Transverse colon (tissue), 4 donors: ENCODE measurements at regions of chr21 and their contacts with region 1.

Region 1: GRCh38 chr21:15729674-15730483 is at the start of gene USP25:
- DNase-seq: peak; percentile 95
- H3K4me3 ChIP-seq: peak within 1 kb of the TSS; percentile 74 to 88 (median 84)
- H3K27ac ChIP-seq: peak within 1 kb of the TSS; percentile 96 to 99 (median 96)
- H3K4me1 ChIP-seq: peaks cover 5 to 41% (median 22%) of the 10 kb centered on the region in 4 donors
- H3K27me3 ChIP-seq: no peaks in the 10 kb centered on the region
- CTCF ChIP-seq: no peak
- EP300 ChIP-seq: no peak
- POLR2A ChIP-seq: peak; percentile 68
- total RNA-seq, gene USP25: 37.4 to 107 (median 69.2) TPM

Region 2: GRCh38 chr21:14382835-14383594 is 1346.9 kb before region 1 on chr21 and contains the start of gene HSPA13:
- in situ Hi-C with region 1: no loop called
- intact Hi-C with region 1: loop called (anchors 10 kb)
- DNase-seq: peak; percentile 100
- H3K4me3 ChIP-seq: peak within 1 kb of the TSS; percentile 77 to 96 (median 84)
- H3K27ac ChIP-seq: peak within 1 kb of the TSS; percentile 88 to 93 (median 92)
- H3K4me1 ChIP-seq: peaks cover 17 to 37% (median 17%) of the 10 kb centered on the region in 4 donors
- H3K27me3 ChIP-seq: no peaks in the 10 kb centered on the region
- CTCF ChIP-seq: peak in 1 of 5 experiments; percentile 9
- EP300 ChIP-seq: no peak
- POLR2A ChIP-seq: peak; percentile 77
- total RNA-seq, gene HSPA13: 1.9 to 20.7 (median 13.6) TPM

Region 3: DNA sequence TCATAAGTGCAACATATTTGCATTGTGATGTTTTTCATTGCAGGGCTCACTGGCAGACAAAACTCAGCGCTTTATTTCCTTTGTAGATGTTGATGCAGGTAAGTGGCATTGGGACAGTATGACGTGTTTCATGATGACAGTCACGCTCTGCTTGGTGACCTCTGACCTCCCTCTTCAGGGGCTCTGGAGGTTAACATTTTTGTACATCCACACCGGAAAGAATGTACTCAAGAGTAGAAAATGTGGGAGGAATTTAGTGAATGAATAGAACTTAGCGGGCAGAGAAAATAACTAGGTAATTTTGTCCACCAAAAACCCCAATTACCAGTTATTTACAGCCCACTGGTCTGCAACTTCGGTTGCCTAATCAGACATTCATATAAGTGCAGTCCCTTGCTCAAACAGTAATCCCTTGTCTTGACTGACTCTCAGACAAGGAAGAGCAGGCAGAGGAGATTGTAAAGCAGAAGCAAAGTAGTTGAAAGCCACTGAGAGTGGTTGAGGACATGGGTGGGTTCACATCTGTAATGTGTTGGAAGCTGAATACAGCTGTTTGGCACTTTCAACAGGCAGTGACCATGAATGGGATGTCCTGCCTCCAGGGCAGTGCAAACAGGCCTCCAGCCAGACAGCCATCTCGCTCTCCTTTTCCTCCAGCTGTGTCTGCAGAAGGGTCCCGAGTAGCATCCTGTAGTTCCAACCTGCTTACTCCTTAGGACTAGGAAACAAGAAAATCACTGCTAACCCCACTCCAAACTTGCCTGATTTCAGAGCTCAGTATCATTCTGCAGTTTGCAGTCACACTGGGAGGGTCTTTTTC is 854.0 kb before region 1 on chr21:
- in situ Hi-C with region 1: no loop called
- intact Hi-C with region 1: no loop called
- DNase-seq: no peak
- H3K4me3 ChIP-seq: no peak overlapping the region
- H3K27ac ChIP-seq: no peak overlapping the region
- H3K4me1 ChIP-seq: peaks cover 0 to 48% (median 7%) of the 10 kb centered on the region in 4 donors
- H3K27me3 ChIP-seq: no peaks in the 10 kb centered on the region
- CTCF ChIP-seq: no peak
- EP300 ChIP-seq: no peak
- POLR2A ChIP-seq: no peak